GM18951 (cell line): ENCODE measurements at regions of chr1 and their contacts with region 1.

Region 1: GRCh38 chr1:206106328-206107167 is 10.6 kb downstream of the AVPR1B start:
- POLR2A ChIP-seq: no peak

Region 2: GRCh38 chr1:205983925-205984725 is 122.4 kb before region 1 on chr1:
- in situ Hi-C with region 1: loop called (anchors 10 kb)
- POLR2A ChIP-seq: no peak

Region 3: DNA sequence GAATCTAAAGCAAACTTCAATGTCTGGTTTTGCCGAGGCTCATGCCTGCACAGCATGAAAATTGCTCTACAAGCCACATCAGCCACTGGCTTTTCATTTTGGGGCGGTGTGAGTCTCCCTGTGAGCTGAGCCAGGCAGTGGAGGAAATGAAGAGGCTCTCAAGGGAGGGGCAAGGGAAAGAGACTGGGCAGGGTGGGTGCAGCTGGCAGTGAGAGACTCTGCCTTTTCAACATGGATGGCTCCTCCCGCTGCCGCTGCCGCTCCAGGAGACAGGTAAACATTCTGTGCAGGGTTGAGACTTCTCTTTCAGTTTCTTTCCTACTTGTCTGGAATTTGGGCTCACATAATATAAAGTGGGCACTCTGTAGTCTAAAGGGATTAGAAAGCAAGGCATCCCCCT is 71.5 kb before region 1 on chr1:
- in situ Hi-C with region 1: loop called (anchors 5 kb)
- POLR2A ChIP-seq: no peak